Psoas muscle (tissue), 8 donors: ENCODE measurements at regions of chr20 and their contacts with region 1.

Region 1: DNA sequence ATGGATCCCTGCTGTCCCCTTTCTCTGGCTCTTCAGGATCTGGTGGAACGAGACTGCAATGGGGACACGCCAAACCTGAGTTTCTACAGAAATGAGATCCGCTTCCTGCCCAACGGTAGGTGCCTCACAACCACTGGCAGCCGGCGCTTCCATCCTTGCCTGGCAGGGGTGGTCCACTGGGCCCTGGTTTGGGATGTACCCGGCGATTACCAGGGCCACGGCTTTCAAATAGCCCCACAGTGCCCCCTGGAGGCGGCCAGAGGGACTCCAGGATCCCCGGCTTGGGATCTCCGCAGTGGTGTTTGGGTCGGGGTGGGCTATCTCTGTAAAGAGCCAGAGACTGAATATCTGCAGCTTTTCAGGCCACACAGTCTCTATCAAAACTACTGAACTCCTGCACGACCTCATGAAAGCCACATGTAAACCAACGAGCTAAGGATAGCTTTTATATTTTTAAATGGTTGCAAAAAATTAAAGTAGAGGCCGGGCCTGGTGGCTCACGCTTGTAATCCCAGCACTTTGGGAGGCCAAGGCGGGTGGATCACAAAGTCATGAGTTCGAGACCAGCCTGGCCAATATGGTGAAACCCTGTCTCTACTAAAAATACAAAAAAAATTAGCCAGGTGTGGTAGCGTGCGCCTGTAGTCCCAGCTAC is 3.7 kb downstream of the OGFR start:
- DNase-seq: peak; percentile 77 to 83
- ATAC-seq: peak; percentile 61 to 77 (median 67)
- H3K4me3 ChIP-seq: no peak overlapping the region
- H3K27ac ChIP-seq: no peak overlapping the region
- H3K4me1 ChIP-seq: peaks cover 13% of the 10 kb centered on the region
- H3K27me3 ChIP-seq: no peaks in the 10 kb centered on the region
- CTCF ChIP-seq: peak; percentile 92

Region 2: GRCh38 chr20:62386383-62387218 is 421.7 kb before region 1 on chr20 and contains the start of gene RPS21:
- intact Hi-C with region 1: loop called in 1 of 2 experiments (anchors 10 kb)
- DNase-seq: peak; percentile 94 to 98
- ATAC-seq: peak; percentile 92 to 94 (median 94)
- H3K4me3 ChIP-seq: peak within 1 kb of the TSS; percentile 88
- H3K27ac ChIP-seq: peak within 1 kb of the TSS; percentile 96
- H3K4me1 ChIP-seq: peaks cover 26% of the 10 kb centered on the region
- H3K27me3 ChIP-seq: no peaks in the 10 kb centered on the region
- CTCF ChIP-seq: no peak
- total RNA-seq, gene RPS21: 602 to 1,206 (median 1,044) TPM

Region 3: DNA sequence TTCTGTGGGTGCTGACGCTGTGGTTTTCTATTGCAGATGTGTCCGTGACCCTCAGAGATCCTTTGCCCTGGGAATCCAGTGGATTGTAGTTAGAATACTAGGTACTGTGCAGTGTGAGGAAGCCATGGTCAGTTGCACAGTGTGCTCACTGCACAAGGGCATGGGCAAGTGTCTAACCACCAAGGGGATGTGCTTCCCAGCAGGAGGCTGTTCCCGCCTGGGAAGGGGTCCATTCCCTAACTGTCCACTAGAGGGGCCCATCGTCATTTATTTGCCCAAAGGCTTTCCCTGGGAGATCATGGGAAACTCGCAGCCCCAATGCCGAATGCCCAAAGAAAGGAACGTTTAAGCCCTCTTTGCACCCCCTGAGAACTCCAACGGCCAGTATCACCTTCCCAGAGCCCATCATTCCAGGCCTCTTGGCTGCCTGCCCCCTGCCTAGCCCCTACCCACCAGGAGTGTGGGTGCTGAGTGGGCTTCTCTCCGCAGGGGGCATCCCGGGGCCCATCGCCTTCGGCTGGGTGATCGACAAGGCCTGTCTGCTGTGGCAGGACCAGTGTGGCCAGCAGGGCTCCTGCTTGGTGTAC is 139.8 kb before region 1 on chr20:
- intact Hi-C with region 1: loop called (anchors 2 kb)
- DNase-seq: peak; percentile 65 to 77
- ATAC-seq: peak; percentile 72 to 87 (median 77)
- H3K4me3 ChIP-seq: no peak overlapping the region
- H3K27ac ChIP-seq: no peak overlapping the region
- H3K4me1 ChIP-seq: no peaks in the 10 kb centered on the region
- H3K27me3 ChIP-seq: peaks cover 0 to 4% (median 0%) of the 10 kb centered on the region in 3 donors
- CTCF ChIP-seq: peak; percentile 77

Region 4: GRCh38 chr20:62937366-62938104 is 129.2 kb after region 1 on chr20:
- intact Hi-C with region 1: loop called in 1 of 2 experiments (anchors 10 kb)
- DNase-seq: peak; percentile 97 to 99
- ATAC-seq: peak; percentile 97 to 99 (median 98)
- H3K4me3 ChIP-seq: peak overlapping the region; percentile 93
- H3K27ac ChIP-seq: peak overlapping the region; percentile 93
- H3K4me1 ChIP-seq: peaks cover 38% of the 10 kb centered on the region
- H3K27me3 ChIP-seq: no peaks in the 10 kb centered on the region
- CTCF ChIP-seq: no peak